Activated naive CD4-positive, alpha-beta T cell treated with anti-CD3 and anti-CD28 coated beads for 36 hours (primary cell): ENCODE measurements at regions of chr20 and their contacts with region 1.

Region 1: DNA sequence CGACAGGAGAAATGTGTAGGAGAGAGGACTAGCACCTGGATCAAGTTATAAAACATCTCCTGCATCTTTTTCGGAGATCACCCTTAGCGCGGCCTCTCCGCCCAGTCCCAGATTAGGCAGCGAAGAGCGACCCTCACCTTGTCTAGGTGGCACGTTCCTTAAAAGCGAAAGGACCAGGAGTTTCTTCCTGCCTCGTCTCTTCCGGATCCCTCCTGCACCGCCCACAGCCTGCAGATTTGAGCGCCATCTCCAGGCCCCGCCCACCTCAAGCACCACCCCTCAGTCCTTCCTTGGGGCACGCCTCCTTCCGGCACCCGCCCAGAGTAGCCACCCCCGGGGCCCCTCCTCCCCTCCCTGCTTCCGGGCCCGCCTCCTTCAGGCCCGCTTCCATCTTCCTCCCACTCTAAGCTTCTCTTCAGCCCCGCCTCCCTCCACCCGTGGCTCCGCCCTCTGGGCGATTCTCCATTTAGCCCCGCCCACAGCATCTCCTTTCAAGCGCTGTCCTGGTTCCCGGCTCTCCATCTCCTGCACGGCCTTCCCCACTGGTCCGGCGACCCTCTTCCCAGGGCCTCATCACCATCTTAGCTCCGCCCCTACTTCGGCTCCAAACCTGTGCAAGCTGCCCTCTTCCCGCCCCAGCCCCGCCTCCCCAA is 662 bp upstream of the RALY start:
- DNase-seq: peak; percentile 100
- H3K4me3 Mint-ChIP-seq: peak overlapping the region; percentile 90
- H3K27ac Mint-ChIP-seq: peak overlapping the region; percentile 98
- H3K4me1 Mint-ChIP-seq: peaks cover 46% of the 10 kb centered on the region
- H3K27me3 Mint-ChIP-seq: no peaks in the 10 kb centered on the region

Region 2: GRCh38 chr20:33489495-33490022 is 503.5 kb before region 1 on chr20:
- CTCF ChIA-PET with region 1: no interaction called
- intact Hi-C with region 1: loop called (anchors 1 kb)
- DNase-seq: peak; percentile 100
- H3K4me3 Mint-ChIP-seq: peak overlapping the region; percentile 79
- H3K27ac Mint-ChIP-seq: peak overlapping the region; percentile 81
- H3K4me1 Mint-ChIP-seq: peaks cover 17% of the 10 kb centered on the region
- H3K27me3 Mint-ChIP-seq: no peaks in the 10 kb centered on the region

Region 3: GRCh38 chr20:33719989-33720709 is 272.9 kb before region 1 on chr20 and contains the start of gene PXMP4:
- CTCF ChIA-PET with region 1: no interaction called
- intact Hi-C with region 1: loop called (anchors 1 kb)
- DNase-seq: peak; percentile 95
- H3K4me3 Mint-ChIP-seq: peak within 1 kb of the TSS; percentile 79
- H3K27ac Mint-ChIP-seq: peak within 1 kb of the TSS; percentile 76
- H3K4me1 Mint-ChIP-seq: peaks cover 21% of the 10 kb centered on the region
- H3K27me3 Mint-ChIP-seq: no peaks in the 10 kb centered on the region
- total RNA-seq, gene PXMP4: 9.5 to 10.3 TPM

Region 4: DNA sequence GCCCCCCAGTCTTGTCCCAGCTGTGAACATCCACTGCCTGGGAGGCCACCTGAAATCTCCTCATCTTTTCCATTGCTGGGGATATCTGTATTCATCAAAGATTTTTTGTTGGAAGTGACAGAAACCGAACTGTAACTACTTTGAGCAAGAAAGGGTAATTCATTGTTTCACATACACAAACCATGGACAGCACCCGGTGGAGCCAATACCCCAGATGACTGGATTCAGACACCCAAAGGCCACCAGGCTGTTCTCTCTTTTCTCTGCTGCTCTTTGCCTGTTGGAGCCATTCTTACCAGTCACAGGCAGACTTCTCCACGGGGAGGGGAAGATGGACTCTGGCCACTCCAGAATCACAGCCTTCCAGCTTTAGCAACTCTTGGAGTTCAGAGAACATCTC is 11.1 kb before region 1 on chr20:
- CTCF ChIA-PET with region 1: no interaction called
- intact Hi-C with region 1: no loop called
- DNase-seq: no peak
- H3K4me3 Mint-ChIP-seq: no peak overlapping the region
- H3K27ac Mint-ChIP-seq: no peak overlapping the region
- H3K4me1 Mint-ChIP-seq: no peaks in the 10 kb centered on the region
- H3K27me3 Mint-ChIP-seq: peaks cover 7% of the 10 kb centered on the region

Region 5: DNA sequence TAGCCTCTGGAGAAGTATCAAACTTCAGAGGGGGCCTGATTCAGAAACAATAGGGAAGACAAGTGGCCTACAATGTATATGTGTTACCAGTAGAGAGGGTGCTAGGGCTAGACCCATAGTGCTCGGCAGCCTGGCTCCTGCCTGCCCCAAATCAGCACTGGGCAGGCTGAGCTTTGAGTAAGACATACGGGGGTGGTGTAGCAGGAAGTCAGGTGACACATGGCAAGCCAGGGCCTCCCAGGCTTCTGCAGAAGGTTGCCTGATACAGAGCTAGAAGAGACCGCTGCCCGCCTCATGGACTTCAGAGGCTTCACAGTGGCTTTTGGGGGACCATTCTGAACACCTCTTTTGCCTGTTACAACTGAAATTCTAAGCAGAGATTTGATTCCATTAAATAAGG is 44.1 kb after region 1 on chr20:
- CTCF ChIA-PET with region 1: no interaction called
- intact Hi-C with region 1: loop called (anchors 2 kb)
- DNase-seq: peak; percentile 81
- H3K4me3 Mint-ChIP-seq: peak overlapping the region; percentile 22
- H3K27ac Mint-ChIP-seq: no peak overlapping the region
- H3K4me1 Mint-ChIP-seq: peaks cover 68% of the 10 kb centered on the region
- H3K27me3 Mint-ChIP-seq: no peaks in the 10 kb centered on the region

Region 6: DNA sequence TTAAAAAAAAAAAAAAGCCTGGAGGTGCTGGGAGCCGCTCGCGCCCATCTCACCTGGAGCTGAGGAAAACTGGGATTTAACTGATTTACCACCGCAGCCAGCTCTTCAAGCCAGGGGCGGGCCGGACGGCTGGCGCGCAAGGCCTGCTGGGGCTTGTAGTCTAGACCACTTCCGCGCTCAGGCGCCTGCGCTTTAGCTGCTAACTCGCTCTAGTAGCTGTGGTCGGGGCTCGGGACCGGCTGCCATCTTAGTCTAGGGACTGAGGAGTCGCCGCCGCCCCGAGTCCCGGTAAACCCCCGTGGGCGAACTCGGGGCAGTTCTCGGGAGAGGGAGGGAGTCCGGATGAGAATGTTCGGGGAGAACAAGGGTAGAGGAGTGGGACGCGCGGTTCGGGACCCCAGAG is 370.0 kb after region 1 on chr20 and contains the start of gene ITCH:
- CTCF ChIA-PET with region 1: no interaction called
- intact Hi-C with region 1: loop called (anchors 2 kb)
- DNase-seq: peak; percentile 96
- H3K4me3 Mint-ChIP-seq: peak within 1 kb of the TSS; percentile 97
- H3K27ac Mint-ChIP-seq: peak within 1 kb of the TSS; percentile 95
- H3K4me1 Mint-ChIP-seq: peaks cover 34% of the 10 kb centered on the region
- H3K27me3 Mint-ChIP-seq: no peaks in the 10 kb centered on the region
- total RNA-seq, gene ITCH: 35.3 to 40.0 TPM

Region 7: GRCh38 chr20:34676642-34677373 is 683.8 kb after region 1 on chr20 and contains the start of gene PIGU:
- CTCF ChIA-PET with region 1: no interaction called
- intact Hi-C with region 1: loop called (anchors 1 kb)
- DNase-seq: peak; percentile 97
- H3K4me3 Mint-ChIP-seq: peak within 1 kb of the TSS; percentile 97
- H3K27ac Mint-ChIP-seq: peak within 1 kb of the TSS; percentile 90
- H3K4me1 Mint-ChIP-seq: peaks cover 29% of the 10 kb centered on the region
- H3K27me3 Mint-ChIP-seq: no peaks in the 10 kb centered on the region
- total RNA-seq, gene PIGU: 18.8 to 18.9 TPM

Region 8: GRCh38 chr20:35695245-35695749 is 1702.2 kb after region 1 on chr20:
- CTCF ChIA-PET with region 1: no interaction called
- intact Hi-C with region 1: no loop called
- DNase-seq: no peak
- H3K4me3 Mint-ChIP-seq: no peak overlapping the region
- H3K27ac Mint-ChIP-seq: peak overlapping the region; percentile 17
- H3K4me1 Mint-ChIP-seq: peaks cover 24% of the 10 kb centered on the region
- H3K27me3 Mint-ChIP-seq: no peaks in the 10 kb centered on the region